RWPE1 (cell line): ENCODE measurements at regions of chr17 and their contacts with region 1.

Region 1: GRCh38 chr17:28357061-28357900 is at the start of gene POLDIP2:
- DNase-seq: peak; percentile 92
- H3K27ac ChIP-seq: peak within 1 kb of the TSS; percentile 77
- CTCF ChIP-seq: no peak

Region 2: GRCh38 chr17:28318209-28318758 is 39.0 kb before region 1 on chr17:
- CTCF ChIA-PET with region 1: no interaction called
- POLR2A ChIA-PET with region 1: no interaction called
- DNase-seq: no peak
- H3K27ac ChIP-seq: peak overlapping the region; percentile 82
- CTCF ChIP-seq: no peak

Region 3: DNA sequence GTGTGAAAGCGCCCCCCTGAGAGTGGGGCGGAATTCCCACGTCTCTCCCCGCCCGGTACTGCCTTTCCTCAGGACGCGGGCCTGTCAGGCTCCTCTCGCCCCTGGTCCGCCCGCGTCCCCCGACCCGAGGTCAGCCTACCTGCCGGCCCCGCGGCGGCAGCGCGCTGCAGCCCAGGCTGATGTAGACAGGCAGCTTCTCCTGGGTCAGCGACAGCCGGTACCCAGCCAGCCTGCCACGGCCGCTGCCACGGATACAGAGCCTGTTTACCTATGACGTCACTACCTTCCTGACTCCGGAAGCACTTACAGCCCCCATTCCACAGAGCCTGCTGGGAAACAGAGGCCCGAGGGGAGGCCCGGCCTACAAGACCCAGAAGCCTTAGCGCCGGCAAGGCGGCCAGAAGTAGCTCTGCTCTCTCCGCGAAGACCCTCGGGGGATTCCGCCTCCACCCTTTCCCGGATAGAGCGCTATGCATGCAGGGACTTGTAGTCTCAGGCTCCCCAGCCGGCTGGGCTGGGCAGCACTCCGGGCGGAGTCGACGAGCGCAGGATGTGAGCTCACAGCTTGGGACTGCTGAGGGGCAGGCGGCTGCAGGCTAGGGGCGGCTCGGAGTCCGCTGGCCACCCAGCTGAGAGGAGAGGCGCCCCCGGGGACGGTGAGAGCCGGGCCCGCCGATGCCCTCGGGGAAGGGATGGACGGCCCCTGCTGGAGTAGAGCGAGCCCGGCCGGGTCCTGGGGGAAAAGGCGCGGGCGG is 21.9 kb before region 1 on chr17 and contains the starts of genes IFT20 and TNFAIP1:
- CTCF ChIA-PET with region 1: no interaction called
- POLR2A ChIA-PET with region 1: interaction called, 16 read pairs
- DNase-seq: peak; percentile 93
- H3K27ac ChIP-seq: peak within 1 kb of the TSS; percentile 96
- CTCF ChIP-seq: no peak

Region 4: DNA sequence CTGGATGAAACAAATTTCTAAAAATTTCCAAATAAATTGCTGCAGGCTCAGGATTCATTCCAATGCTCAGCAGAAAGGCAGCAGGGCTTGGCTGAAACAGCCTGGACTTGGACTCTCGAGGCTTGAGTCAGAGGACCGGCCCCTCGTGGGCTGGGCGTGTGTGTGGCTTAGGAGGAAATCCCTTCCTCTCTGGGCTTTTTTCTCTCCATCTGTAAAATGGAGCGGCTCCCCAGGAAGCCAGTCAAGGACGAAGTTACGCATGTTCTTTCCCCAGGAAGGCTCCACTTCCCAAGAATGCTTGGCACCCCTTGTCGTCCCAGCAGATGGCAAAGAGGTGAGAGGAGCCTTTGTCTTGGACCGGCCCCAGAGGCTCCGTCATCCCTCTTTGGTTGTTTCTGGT is 35.2 kb after region 1 on chr17:
- CTCF ChIA-PET with region 1: no interaction called
- POLR2A ChIA-PET with region 1: no interaction called
- DNase-seq: no peak
- H3K27ac ChIP-seq: no peak overlapping the region
- CTCF ChIP-seq: no peak

Region 5: GRCh38 chr17:28518132-28518531 is 160.9 kb after region 1 on chr17:
- CTCF ChIA-PET with region 1: no interaction called
- POLR2A ChIA-PET with region 1: no interaction called
- DNase-seq: no peak
- H3K27ac ChIP-seq: no peak overlapping the region
- CTCF ChIP-seq: no peak